ENCODE measurements at regions of chr12 and their contacts with region 1.

Region 1: DNA sequence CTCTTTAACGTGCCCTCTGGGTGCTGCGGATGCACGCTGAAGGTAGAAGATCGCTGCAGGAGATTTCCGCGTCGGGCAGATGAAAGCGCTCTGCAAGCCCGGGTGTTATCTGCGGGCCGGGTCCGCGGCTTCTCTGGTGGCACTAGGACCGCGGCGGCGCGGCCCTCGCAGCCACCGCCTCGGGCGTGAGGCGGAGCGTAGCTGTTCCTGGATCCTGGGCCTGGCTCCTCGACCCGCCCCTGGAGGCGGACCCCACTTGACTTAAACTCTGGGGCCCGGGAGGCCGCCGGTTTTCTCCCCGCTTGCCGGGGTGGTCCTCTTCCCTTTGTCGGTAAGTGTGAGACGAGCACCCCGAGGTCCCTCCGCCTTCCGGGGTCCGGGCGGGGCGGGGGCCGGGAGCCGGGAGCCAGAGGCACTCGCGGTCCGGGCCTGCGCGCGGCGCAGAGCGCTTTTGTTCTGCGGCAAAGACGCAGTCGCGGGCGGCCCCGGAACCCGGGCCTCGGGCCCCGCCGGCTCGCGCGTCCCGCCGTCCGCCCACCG is at the start of gene RESF1:
- DNase-seq: peak; percentile 76 to 92 (median 89)
- H3K4me3 ChIP-seq: peak within 1 kb of the TSS; percentile 87
- H3K4me3 Mint-ChIP-seq: peak within 1 kb of the TSS; percentile 85 to 100 (median 96)
- H3K27ac ChIP-seq: peak within 1 kb of the TSS; percentile 78
- H3K27ac Mint-ChIP-seq: peak within 1 kb of the TSS; percentile 90 to 98 (median 96)
- H3K4me1 ChIP-seq: peaks cover 39% of the 10 kb centered on the region
- H3K4me1 Mint-ChIP-seq: peaks cover 52 to 71% (median 71%) of the 10 kb centered on the region in 3 donors
- H3K27me3 ChIP-seq: no peaks in the 10 kb centered on the region
- H3K27me3 Mint-ChIP-seq: no peaks in the 10 kb centered on the region
- total RNA-seq, gene RESF1: 90.5 to 90.9 TPM

Region 2: DNA sequence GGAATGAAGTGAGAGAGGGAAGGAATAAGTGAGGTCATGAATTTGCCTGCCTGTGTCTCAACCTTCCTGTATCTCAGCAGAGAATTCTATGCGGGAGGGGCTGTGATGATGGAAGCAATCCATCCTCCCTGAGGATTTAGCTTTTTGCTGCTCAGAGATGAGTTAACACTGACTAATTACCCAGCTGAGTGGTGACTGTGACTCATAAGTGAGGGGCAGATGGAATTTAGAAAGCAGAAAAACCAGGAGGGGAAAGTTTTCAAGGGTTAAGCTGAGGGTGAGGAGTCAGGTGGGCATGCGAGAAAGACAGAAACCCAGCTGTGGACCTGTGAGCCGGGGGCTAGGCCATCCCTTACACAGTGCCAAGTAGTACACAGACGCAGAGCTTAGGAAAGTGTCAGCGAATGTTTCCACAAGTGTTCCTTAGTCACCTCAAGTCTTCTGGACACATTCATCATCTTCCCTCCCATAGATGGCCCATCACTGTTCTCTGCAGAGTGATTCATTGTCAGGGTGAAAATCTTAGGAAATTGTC is 1541.5 kb before region 1 on chr12:
- CTCF ChIA-PET with region 1: no interaction called
- POLR2A ChIA-PET with region 1: no interaction called
- DNase-seq: no peak
- H3K4me3 ChIP-seq: no peak overlapping the region
- H3K4me3 Mint-ChIP-seq: no peak overlapping the region
- H3K27ac ChIP-seq: no peak overlapping the region
- H3K27ac Mint-ChIP-seq: peak overlapping the region in 1 of 8 donors; percentile 5
- H3K4me1 ChIP-seq: no peaks in the 10 kb centered on the region
- H3K4me1 Mint-ChIP-seq: no peaks in the 10 kb centered on the region
- H3K27me3 ChIP-seq: no peaks in the 10 kb centered on the region
- H3K27me3 Mint-ChIP-seq: peaks cover 0 to 3% of the 10 kb centered on the region in 2 donors

Region 3: GRCh38 chr12:31659087-31659933 is 299.9 kb before region 1 on chr12 and contains the start of gene ETFBKMT:
- CTCF ChIA-PET with region 1: interaction called, 5 read pairs
- POLR2A ChIA-PET with region 1: interaction called, 16 read pairs
- DNase-seq: peak; percentile 84 to 95 (median 92)
- H3K4me3 ChIP-seq: peak within 1 kb of the TSS; percentile 79
- H3K4me3 Mint-ChIP-seq: peak within 1 kb of the TSS; percentile 89 to 99 (median 95)
- H3K27ac ChIP-seq: peak within 1 kb of the TSS; percentile 86
- H3K27ac Mint-ChIP-seq: peak within 1 kb of the TSS; percentile 91 to 100 (median 98)
- H3K4me1 ChIP-seq: peaks cover 4% of the 10 kb centered on the region
- H3K4me1 Mint-ChIP-seq: peaks cover 11 to 22% (median 21%) of the 10 kb centered on the region in 3 donors
- H3K27me3 ChIP-seq: no peaks in the 10 kb centered on the region
- H3K27me3 Mint-ChIP-seq: no peaks in the 10 kb centered on the region
- total RNA-seq, gene ETFBKMT: 1.1 to 1.4 TPM

Region 4: GRCh38 chr12:31728917-31729640 is 230.2 kb before region 1 on chr12 and contains the start of gene AMN1:
- CTCF ChIA-PET with region 1: interaction called, 11 read pairs
- POLR2A ChIA-PET with region 1: interaction called, 22 read pairs
- DNase-seq: peak; percentile 94 to 99 (median 98)
- H3K4me3 ChIP-seq: peak within 1 kb of the TSS; percentile 92
- H3K4me3 Mint-ChIP-seq: peak within 1 kb of the TSS; percentile 95 to 100 (median 98)
- H3K27ac ChIP-seq: peak within 1 kb of the TSS; percentile 98
- H3K27ac Mint-ChIP-seq: peak within 1 kb of the TSS; percentile 92 to 99 (median 98)
- H3K4me1 ChIP-seq: peaks cover 32% of the 10 kb centered on the region
- H3K4me1 Mint-ChIP-seq: peaks cover 63 to 80% (median 79%) of the 10 kb centered on the region in 3 donors
- H3K27me3 ChIP-seq: no peaks in the 10 kb centered on the region
- H3K27me3 Mint-ChIP-seq: no peaks in the 10 kb centered on the region
- total RNA-seq, gene AMN1: 2.6 to 3.8 TPM

Region 5: DNA sequence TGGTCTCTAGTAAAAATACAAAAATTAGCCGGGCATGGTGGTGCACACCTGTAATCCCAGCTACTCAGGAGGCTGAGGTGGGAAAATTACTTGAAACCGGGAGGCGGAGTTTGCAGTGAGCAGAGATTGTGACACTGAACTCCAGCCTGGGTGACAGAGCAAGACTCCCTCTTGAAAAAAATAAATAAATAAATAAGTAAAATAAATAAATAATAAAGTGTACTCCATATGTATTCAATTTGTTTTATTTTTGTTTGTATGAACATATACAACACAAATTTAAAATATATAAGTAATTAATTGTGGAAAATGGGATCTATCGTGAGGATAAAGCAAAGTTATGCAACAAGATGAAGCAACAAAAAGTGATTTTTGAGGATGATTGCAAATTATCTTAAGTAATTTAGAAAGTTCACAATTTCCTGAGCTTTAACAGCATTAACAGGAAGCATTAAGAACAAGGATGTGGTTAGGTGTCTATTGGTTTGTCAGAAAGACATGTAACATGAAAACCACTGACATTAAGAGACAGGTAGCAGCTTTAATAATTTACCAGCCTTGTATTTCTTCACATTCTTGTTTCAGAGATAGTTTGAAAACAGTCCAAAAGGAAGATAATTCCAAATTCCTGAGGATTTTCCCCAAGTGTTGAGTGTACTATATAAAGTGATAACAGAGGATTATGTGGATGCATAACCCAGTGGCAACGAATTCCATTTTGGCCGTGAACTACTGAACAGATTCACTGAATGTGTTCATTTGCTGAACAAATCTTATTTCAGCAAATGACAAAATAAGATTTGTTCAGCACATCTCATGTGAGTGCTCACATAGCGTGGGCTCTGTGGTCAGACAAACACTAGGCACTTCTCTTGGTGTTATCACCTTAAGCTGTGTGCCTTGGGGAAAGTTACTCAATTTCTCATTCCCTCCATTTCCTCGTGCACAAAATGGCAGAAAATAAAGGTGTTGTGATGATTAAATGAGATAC is 68.6 kb before region 1 on chr12:
- CTCF ChIA-PET with region 1: interaction called, 15 read pairs
- POLR2A ChIA-PET with region 1: interaction called, 10 read pairs
- DNase-seq: peak in 2 of 5 donors; percentile 71 to 74
- H3K4me3 ChIP-seq: peak overlapping the region; percentile 24
- H3K4me3 Mint-ChIP-seq: peak overlapping the region; percentile 31 to 75 (median 68)
- H3K27ac ChIP-seq: no peak overlapping the region
- H3K27ac Mint-ChIP-seq: peak overlapping the region; percentile 79 to 91 (median 87)
- H3K4me1 ChIP-seq: peaks cover 76% of the 10 kb centered on the region
- H3K4me1 Mint-ChIP-seq: peaks cover 55 to 75% (median 72%) of the 10 kb centered on the region in 3 donors
- H3K27me3 ChIP-seq: no peaks in the 10 kb centered on the region
- H3K27me3 Mint-ChIP-seq: no peaks in the 10 kb centered on the region

Region 6: GRCh38 chr12:31928246-31929026 is 30.8 kb before region 1 on chr12:
- CTCF ChIA-PET with region 1: interaction called, 11 read pairs
- POLR2A ChIA-PET with region 1: interaction called, 5 read pairs
- DNase-seq: peak in 3 of 5 donors; percentile 34 to 58 (median 56)
- H3K4me3 ChIP-seq: no peak overlapping the region
- H3K4me3 Mint-ChIP-seq: peak overlapping the region; percentile 72 to 94 (median 89)
- H3K27ac ChIP-seq: no peak overlapping the region
- H3K27ac Mint-ChIP-seq: peak overlapping the region; percentile 82 to 98 (median 97)
- H3K4me1 ChIP-seq: peaks cover 53% of the 10 kb centered on the region
- H3K4me1 Mint-ChIP-seq: peaks cover 57 to 62% (median 62%) of the 10 kb centered on the region in 3 donors
- H3K27me3 ChIP-seq: no peaks in the 10 kb centered on the region
- H3K27me3 Mint-ChIP-seq: no peaks in the 10 kb centered on the region

Region 7: GRCh38 chr12:32032205-32032810 is 73.1 kb after region 1 on chr12:
- CTCF ChIA-PET with region 1: no interaction called
- POLR2A ChIA-PET with region 1: no interaction called
- DNase-seq: no peak
- H3K4me3 ChIP-seq: no peak overlapping the region
- H3K4me3 Mint-ChIP-seq: no peak overlapping the region
- H3K27ac ChIP-seq: no peak overlapping the region
- H3K27ac Mint-ChIP-seq: peak overlapping the region in 2 of 8 donors; percentile 8 to 80
- H3K4me1 ChIP-seq: no peaks in the 10 kb centered on the region
- H3K4me1 Mint-ChIP-seq: no peaks in the 10 kb centered on the region
- H3K27me3 ChIP-seq: no peaks in the 10 kb centered on the region
- H3K27me3 Mint-ChIP-seq: peaks cover 0 to 3% of the 10 kb centered on the region in 2 donors